ENCODE measurements at regions of chr11 and their contacts with region 1.

Region 1: DNA sequence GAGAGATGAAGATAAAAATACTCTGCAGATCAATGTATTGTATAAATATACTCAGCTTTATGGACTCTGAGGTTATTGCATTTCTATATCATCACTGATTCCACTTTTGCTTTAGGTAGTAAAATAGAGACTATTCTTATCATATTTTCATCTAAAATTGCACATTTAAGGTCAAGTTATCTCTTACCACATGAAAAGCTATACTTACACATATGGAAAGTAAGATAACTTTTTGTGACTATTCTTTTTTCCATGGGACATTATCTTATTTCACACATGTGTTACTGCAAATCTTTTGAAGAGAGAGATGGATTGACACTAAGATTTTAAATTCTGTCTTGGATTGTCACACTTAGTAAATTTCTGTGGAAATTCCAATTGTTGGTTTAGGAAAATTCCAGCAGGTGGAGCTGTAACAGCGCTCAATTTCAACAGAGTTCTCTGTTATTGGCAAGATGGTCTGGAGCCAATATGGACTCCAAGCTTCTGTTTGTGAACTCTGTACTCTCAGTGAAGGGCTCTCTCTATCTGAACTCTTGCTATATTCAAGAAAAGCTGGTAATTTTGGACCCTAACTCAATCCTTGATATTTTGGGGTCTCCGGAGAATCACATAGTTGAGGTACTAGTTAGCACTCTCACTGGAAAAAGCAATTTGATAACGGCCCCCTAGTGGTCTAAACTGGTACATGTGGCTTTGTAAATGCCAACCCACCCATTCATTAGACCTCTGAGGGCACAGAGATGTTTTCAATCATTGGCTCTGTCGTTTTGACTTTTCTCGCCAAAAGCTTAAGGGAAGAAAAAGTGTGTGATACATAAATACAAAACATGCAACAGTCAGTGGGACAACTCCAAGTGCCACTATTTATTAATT is 429.7 kb downstream of the ETS1 start:
- DNase-seq: peak; percentile 53
- H3K4me3 Mint-ChIP-seq: peak overlapping the region; percentile 59
- H3K27ac Mint-ChIP-seq: peak overlapping the region; percentile 59
- H3K4me1 Mint-ChIP-seq: peaks cover 10% of the 10 kb centered on the region
- H3K27me3 Mint-ChIP-seq: no peaks in the 10 kb centered on the region

Region 2: DNA sequence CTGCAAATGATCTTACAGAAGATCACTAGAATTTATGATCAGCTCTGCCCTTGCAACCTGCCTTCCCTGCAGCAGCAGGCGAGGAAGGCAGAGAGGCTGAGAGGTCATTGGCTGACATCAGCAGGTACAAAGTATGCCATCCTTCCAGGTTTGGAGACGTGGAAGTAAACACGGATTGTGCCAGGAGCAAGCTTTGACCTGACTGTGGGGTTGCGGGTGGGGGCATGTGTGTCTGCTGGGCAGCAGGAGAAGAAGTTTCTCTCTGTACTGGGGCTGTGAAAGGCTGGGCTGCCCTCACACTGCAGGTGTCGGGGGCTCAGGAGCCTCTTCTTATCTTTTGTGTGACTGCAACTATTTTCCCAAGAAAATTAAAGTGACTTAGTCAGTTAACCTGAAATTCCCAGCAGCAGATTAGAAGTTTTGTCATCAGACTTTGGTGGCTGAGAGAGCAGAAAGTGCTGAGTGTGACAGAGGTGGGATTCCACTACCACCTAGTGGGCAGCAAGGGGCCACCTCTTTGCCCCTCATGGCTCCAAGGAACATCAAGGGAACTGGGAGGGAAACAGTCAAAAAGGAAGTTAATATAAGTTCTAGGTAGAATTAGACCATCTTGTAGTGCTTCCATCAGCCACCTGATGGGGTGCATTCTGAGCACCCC is 136.2 kb before region 1 on chr11:
- CTCF ChIA-PET with region 1: interaction called, 44 read pairs
- POLR2A ChIA-PET with region 1: no interaction called
- intact Hi-C with region 1: no loop called
- DNase-seq: no peak
- H3K4me3 Mint-ChIP-seq: no peak overlapping the region
- H3K27ac Mint-ChIP-seq: no peak overlapping the region
- H3K4me1 Mint-ChIP-seq: peaks cover 7% of the 10 kb centered on the region
- H3K27me3 Mint-ChIP-seq: no peaks in the 10 kb centered on the region

Region 3: GRCh38 chr11:128045094-128045725 is 112.5 kb before region 1 on chr11:
- CTCF ChIA-PET with region 1: interaction called, 94 read pairs
- POLR2A ChIA-PET with region 1: no interaction called
- intact Hi-C with region 1: no loop called
- DNase-seq: no peak
- H3K4me3 Mint-ChIP-seq: no peak overlapping the region
- H3K27ac Mint-ChIP-seq: no peak overlapping the region
- H3K4me1 Mint-ChIP-seq: peaks cover 69% of the 10 kb centered on the region
- H3K27me3 Mint-ChIP-seq: no peaks in the 10 kb centered on the region

Region 4: GRCh38 chr11:128630367-128631230 is 472.9 kb after region 1 on chr11:
- CTCF ChIA-PET with region 1: interaction called, 45 read pairs
- POLR2A ChIA-PET with region 1: no interaction called
- intact Hi-C with region 1: loop called (anchors 1 kb)
- DNase-seq: peak; percentile 94
- H3K4me3 Mint-ChIP-seq: peak overlapping the region; percentile 65
- H3K27ac Mint-ChIP-seq: peak overlapping the region; percentile 92
- H3K4me1 Mint-ChIP-seq: peaks cover 66% of the 10 kb centered on the region
- H3K27me3 Mint-ChIP-seq: no peaks in the 10 kb centered on the region

Region 5: GRCh38 chr11:128784059-128784804 is 626.6 kb after region 1 on chr11:
- CTCF ChIA-PET with region 1: interaction called, 12 read pairs
- POLR2A ChIA-PET with region 1: no interaction called
- intact Hi-C with region 1: no loop called
- DNase-seq: no peak
- H3K4me3 Mint-ChIP-seq: no peak overlapping the region
- H3K27ac Mint-ChIP-seq: no peak overlapping the region
- H3K4me1 Mint-ChIP-seq: peaks cover 33% of the 10 kb centered on the region
- H3K27me3 Mint-ChIP-seq: no peaks in the 10 kb centered on the region

Region 6: DNA sequence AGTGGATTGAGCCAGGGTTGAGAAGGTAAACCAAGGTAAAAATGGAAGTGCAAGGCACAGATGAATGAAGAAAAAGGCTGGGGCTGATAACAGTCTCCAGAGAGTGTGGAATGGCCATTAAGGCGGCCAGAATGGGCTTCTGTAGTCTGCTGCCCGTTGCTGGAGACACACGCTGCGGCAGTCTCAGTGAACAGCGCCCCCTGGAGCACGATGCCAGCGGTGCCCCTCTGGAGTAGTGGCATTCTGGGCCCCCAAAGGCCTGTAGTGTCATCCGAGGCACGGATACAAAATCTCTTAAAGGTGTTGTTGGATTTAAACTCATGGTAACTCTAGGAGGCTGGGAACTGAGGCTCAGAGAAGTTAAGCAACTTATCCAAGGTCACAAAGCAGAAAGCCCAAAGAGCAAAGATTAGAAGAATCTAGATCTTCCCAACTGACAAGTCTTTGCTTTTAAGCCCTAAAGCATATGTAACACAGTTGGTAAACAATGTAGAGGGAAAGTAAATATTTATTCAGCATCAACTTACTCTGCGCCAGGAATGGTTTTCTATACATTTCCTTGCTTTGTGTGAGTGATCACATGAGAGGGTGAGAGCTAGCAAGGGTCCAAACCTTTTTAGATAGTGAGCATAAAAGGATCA is 691.3 kb after region 1 on chr11:
- CTCF ChIA-PET with region 1: interaction called, 19 read pairs
- POLR2A ChIA-PET with region 1: no interaction called
- intact Hi-C with region 1: loop called (anchors 1 kb)
- DNase-seq: peak; percentile 82
- H3K4me3 Mint-ChIP-seq: no peak overlapping the region
- H3K27ac Mint-ChIP-seq: no peak overlapping the region
- H3K4me1 Mint-ChIP-seq: peaks cover 23% of the 10 kb centered on the region
- H3K27me3 Mint-ChIP-seq: no peaks in the 10 kb centered on the region

Region 7: GRCh38 chr11:128965485-128965884 is 807.8 kb after region 1 on chr11:
- CTCF ChIA-PET with region 1: no interaction called
- POLR2A ChIA-PET with region 1: no interaction called
- intact Hi-C with region 1: loop called (anchors 10 kb)
- DNase-seq: no peak
- H3K4me3 Mint-ChIP-seq: no peak overlapping the region
- H3K27ac Mint-ChIP-seq: no peak overlapping the region
- H3K4me1 Mint-ChIP-seq: peaks cover 30% of the 10 kb centered on the region
- H3K27me3 Mint-ChIP-seq: peaks cover 2% of the 10 kb centered on the region

Measured in activated CD4-positive, alpha-beta memory T cell treated with anti-CD3 and anti-CD28 coated beads for 36 hours (primary cell).